HepG2 (cell line): ENCODE measurements at regions of chr12 and their contacts with region 1.

Region 1: GRCh38 chr12:77925536-77926108 is 94.9 kb downstream of the NAV3 start:
- DNase-seq: peak; percentile 78
- ATAC-seq: peak; percentile 100
- H3K4me3 ChIP-seq: no peak overlapping the region
- H3K27ac ChIP-seq: no peak overlapping the region
- H3K4me1 ChIP-seq: no peaks in the 10 kb centered on the region
- H3K27me3 ChIP-seq: no peaks in the 10 kb centered on the region
- CTCF ChIP-seq: peak; percentile 89
- EP300 ChIP-seq: no peak
- POLR2A ChIP-seq: no peak
- RAD21 ChIP-seq: peak; percentile 83

Region 2: GRCh38 chr12:77615331-77615730 is 310.3 kb before region 1 on chr12:
- CTCF ChIA-PET with region 1: no interaction called
- POLR2A ChIA-PET with region 1: no interaction called
- in situ Hi-C with region 1: no loop called
- intact Hi-C with region 1: loop called (anchors 10 kb)
- DNase-seq: no peak
- ATAC-seq: no peak
- H3K4me3 ChIP-seq: no peak overlapping the region
- H3K27ac ChIP-seq: no peak overlapping the region
- H3K4me1 ChIP-seq: no peaks in the 10 kb centered on the region
- H3K27me3 ChIP-seq: no peaks in the 10 kb centered on the region
- CTCF ChIP-seq: no peak
- EP300 ChIP-seq: no peak
- POLR2A ChIP-seq: no peak
- RAD21 ChIP-seq: no peak

Region 3: DNA sequence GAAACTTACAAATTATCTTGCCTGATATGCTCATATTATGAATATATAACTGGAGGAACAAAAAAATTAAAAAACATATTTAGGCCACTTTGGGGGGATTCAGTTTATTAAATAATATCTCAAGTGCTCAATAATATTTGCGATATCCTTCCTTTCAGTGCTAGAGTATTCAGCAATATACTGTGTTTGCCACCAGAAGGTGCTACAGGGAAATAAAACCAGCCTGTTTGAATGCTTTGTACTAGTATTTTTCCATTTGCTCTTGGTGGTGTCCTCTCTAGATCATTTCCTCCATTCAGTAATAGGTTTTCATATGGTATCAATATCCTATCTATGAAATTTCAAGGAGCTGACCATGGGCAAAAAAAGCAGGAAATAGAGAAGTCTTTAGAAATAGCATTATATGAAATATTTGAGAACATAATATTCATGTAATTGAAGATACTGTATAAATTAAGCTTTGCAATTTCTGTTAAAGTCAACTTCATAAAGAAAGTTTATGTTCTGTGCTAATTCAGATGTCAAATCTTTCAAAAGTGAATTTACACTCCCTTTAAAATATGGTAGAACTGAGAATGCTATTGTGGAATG is 201.2 kb before region 1 on chr12:
- CTCF ChIA-PET with region 1: interaction called, 48 read pairs
- POLR2A ChIA-PET with region 1: no interaction called
- in situ Hi-C with region 1: loop called (anchors 5 kb)
- intact Hi-C with region 1: loop called (anchors 1 kb)
- DNase-seq: peak; percentile 22
- ATAC-seq: peak; percentile 70
- H3K4me3 ChIP-seq: no peak overlapping the region
- H3K27ac ChIP-seq: no peak overlapping the region
- H3K4me1 ChIP-seq: no peaks in the 10 kb centered on the region
- H3K27me3 ChIP-seq: no peaks in the 10 kb centered on the region
- CTCF ChIP-seq: peak; percentile 59
- EP300 ChIP-seq: no peak
- POLR2A ChIP-seq: no peak
- RAD21 ChIP-seq: peak; percentile 36; the same call in 1 of the 2 replicates

Region 4: DNA sequence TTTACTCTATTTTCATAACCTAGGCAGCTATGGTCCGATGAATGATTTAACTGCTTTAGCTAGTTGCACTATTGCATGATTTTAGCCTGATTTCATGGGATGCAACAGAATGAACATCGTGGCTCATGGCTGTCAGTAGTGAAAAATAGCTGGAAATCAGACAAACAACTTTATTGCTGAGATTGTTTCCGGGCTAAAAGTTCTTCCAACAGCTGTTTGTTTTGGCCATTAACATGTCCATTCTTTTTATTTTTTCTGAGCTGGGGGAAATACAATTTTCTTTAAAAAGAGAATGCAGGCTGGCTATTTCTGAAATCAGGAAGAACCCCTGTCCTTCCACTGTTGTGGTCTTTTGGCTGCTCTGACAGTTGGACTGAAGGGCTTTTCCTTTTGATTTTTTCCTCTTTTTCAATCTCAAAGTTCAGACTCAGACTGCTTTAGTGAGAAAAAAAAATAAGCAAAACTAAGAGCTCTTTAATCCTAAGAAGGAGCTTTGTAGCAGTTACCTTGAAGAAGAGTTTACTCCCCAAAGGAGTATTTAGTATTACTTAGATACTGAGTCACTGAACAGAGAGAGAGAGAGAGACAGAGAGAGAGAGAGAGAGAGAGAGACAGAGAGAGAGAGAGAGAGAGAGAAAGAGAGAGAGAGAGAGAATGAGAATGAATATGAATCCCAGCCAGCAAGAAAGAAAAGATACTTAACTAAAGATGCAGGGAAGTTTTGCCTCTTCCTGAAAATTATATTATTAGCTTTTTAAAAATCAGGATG is 94.9 kb before region 1 on chr12 and contains the start of gene NAV3:
- CTCF ChIA-PET with region 1: no interaction called
- POLR2A ChIA-PET with region 1: no interaction called
- in situ Hi-C with region 1: no loop called
- intact Hi-C with region 1: no loop called
- DNase-seq: no peak
- ATAC-seq: no peak
- H3K4me3 ChIP-seq: no peak within 1 kb of the TSS
- H3K27ac ChIP-seq: no peak within 1 kb of the TSS
- H3K4me1 ChIP-seq: no peaks in the 10 kb centered on the region
- H3K27me3 ChIP-seq: no peaks in the 10 kb centered on the region
- CTCF ChIP-seq: no peak
- EP300 ChIP-seq: no peak
- POLR2A ChIP-seq: no peak
- RAD21 ChIP-seq: no peak
- total RNA-seq, gene NAV3: 0.18 and 0.51 TPM in 2 replicates